B cell (primary cell): ENCODE measurements at regions of chr18 and their contacts with region 1.

Region 1: DNA sequence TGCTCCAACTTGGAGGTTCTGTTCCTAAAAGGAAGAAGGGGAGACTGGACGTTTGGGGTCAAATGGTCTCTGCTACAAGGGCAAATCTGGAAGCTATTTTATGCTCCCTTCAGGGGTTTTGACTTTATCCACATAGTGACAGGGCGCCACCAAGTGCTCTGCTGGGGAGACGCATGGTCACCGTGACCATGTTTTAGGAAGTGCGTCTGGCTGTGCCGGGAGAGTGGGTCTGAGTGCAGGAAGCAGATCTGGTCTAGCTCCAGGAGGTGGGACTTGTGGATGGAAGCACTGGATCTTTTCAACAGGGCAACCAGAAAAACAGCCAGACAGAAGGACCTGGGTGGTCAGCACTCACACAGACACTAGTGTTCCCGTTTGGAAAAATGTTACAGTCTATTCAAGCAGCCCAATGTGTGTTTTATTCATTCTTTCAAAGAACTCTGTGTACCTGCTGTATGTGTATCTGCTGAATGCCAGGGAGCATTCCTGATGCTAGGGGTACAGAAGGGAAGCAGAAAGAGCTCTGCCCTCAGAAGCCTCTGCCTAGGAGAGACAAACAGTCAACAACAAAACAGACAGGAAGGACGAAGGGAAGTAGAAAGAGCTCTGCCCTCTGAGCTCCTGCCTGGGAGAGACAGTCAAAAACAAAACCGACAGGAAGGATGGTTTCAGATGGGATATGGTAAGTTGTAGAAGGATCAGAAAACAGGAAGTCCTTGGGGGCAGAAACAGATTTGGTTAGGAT is 14.3 kb downstream of the IMPA2 start:
- DNase-seq: peak; percentile 74
- ATAC-seq: peak; percentile 86
- H3K4me3 ChIP-seq: no peak overlapping the region
- H3K4me3 Mint-ChIP-seq: peak overlapping the region; percentile 59
- H3K27ac ChIP-seq: no peak overlapping the region
- H3K27ac Mint-ChIP-seq: no peak overlapping the region
- H3K4me1 ChIP-seq: peaks cover 7 to 11% of the 10 kb centered on the region in 2 donors
- H3K4me1 Mint-ChIP-seq: peaks cover 12% of the 10 kb centered on the region
- H3K27me3 ChIP-seq: no peaks in the 10 kb centered on the region
- H3K27me3 Mint-ChIP-seq: no peaks in the 10 kb centered on the region
- CTCF ChIP-seq: peak; percentile 70

Region 2: GRCh38 chr18:11654736-11655605 is 340.6 kb before region 1 on chr18:
- CTCF ChIA-PET with region 1: interaction called, 17 read pairs
- POLR2A ChIA-PET with region 1: no interaction called
- intact Hi-C with region 1: no loop called
- DNase-seq: peak; percentile 44
- ATAC-seq: no peak
- H3K4me3 ChIP-seq: no peak overlapping the region
- H3K4me3 Mint-ChIP-seq: no peak overlapping the region
- H3K27ac ChIP-seq: no peak overlapping the region
- H3K27ac Mint-ChIP-seq: no peak overlapping the region
- H3K4me1 ChIP-seq: peaks cover 0 to 3% of the 10 kb centered on the region in 2 donors
- H3K4me1 Mint-ChIP-seq: peaks cover 4% of the 10 kb centered on the region
- H3K27me3 ChIP-seq: peaks cover 0 to 16% (median 2%) of the 10 kb centered on the region in 4 experiments
- H3K27me3 Mint-ChIP-seq: peaks cover 52% of the 10 kb centered on the region
- CTCF ChIP-seq: peak; percentile 62

Region 3: DNA sequence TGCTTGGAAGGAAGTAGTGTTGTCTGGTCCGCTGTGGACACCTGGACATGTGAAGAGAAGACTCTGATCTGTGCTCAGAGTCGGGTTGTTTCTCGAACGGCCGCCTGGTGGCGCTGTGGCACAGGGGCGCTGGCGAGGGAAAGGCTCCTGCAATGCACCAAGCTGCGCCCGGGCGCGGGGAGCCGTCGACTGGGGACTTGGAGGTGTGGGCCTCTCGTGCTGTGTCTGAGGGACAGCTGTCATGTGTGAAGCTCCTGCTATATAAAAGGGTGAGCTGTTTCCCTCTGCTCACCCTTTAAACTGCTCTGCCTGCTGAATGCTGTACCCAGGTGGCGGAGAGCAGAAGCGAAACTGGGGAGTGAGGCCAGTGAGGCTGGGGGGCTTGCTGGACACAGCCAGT is 262.6 kb before region 1 on chr18:
- CTCF ChIA-PET with region 1: interaction called, 71 read pairs
- POLR2A ChIA-PET with region 1: no interaction called
- intact Hi-C with region 1: no loop called
- DNase-seq: peak; percentile 73
- ATAC-seq: peak; percentile 68
- H3K4me3 ChIP-seq: no peak overlapping the region
- H3K4me3 Mint-ChIP-seq: peak overlapping the region; percentile 26
- H3K27ac ChIP-seq: no peak overlapping the region
- H3K27ac Mint-ChIP-seq: no peak overlapping the region
- H3K4me1 ChIP-seq: peaks cover 0 to 4% of the 10 kb centered on the region in 2 donors
- H3K4me1 Mint-ChIP-seq: peaks cover 3% of the 10 kb centered on the region
- H3K27me3 ChIP-seq: peaks cover 0 to 10% (median 2%) of the 10 kb centered on the region in 4 experiments
- H3K27me3 Mint-ChIP-seq: peaks cover 46% of the 10 kb centered on the region
- CTCF ChIP-seq: peak; percentile 92

Region 4: GRCh38 chr18:11962597-11962996 is 33.0 kb before region 1 on chr18:
- CTCF ChIA-PET with region 1: no interaction called
- POLR2A ChIA-PET with region 1: no interaction called
- intact Hi-C with region 1: no loop called
- DNase-seq: no peak
- ATAC-seq: no peak
- H3K4me3 ChIP-seq: no peak overlapping the region
- H3K4me3 Mint-ChIP-seq: no peak overlapping the region
- H3K27ac ChIP-seq: no peak overlapping the region
- H3K27ac Mint-ChIP-seq: no peak overlapping the region
- H3K4me1 ChIP-seq: no peaks in the 10 kb centered on the region
- H3K4me1 Mint-ChIP-seq: no peaks in the 10 kb centered on the region
- H3K27me3 ChIP-seq: no peaks in the 10 kb centered on the region
- H3K27me3 Mint-ChIP-seq: peaks cover 6% of the 10 kb centered on the region
- CTCF ChIP-seq: no peak

Region 5: GRCh38 chr18:11974741-11975325 is 20.8 kb before region 1 on chr18:
- CTCF ChIA-PET with region 1: interaction called, 11 read pairs
- POLR2A ChIA-PET with region 1: no interaction called
- intact Hi-C with region 1: no loop called
- DNase-seq: no peak
- ATAC-seq: no peak
- H3K4me3 ChIP-seq: no peak overlapping the region
- H3K4me3 Mint-ChIP-seq: no peak overlapping the region
- H3K27ac ChIP-seq: no peak overlapping the region
- H3K27ac Mint-ChIP-seq: no peak overlapping the region
- H3K4me1 ChIP-seq: peaks cover 0 to 2% of the 10 kb centered on the region in 2 donors
- H3K4me1 Mint-ChIP-seq: peaks cover under 1% of the 10 kb centered on the region
- H3K27me3 ChIP-seq: no peaks in the 10 kb centered on the region
- H3K27me3 Mint-ChIP-seq: no peaks in the 10 kb centered on the region
- CTCF ChIP-seq: no peak